ENCODE measurements at regions of chr22 and their contacts with region 1.

Region 1: GRCh38 chr22:17171313-17172171 is 12.5 kb upstream of the HDHD5 start:
- DNase-seq: peak; percentile 94
- CTCF ChIP-seq: peak; percentile 91

Region 2: GRCh38 chr22:16783930-16784354 is 387.6 kb before region 1 on chr22:
- CTCF ChIA-PET with region 1: no interaction called
- POLR2A ChIA-PET with region 1: no interaction called
- DNase-seq: no peak
- CTCF ChIP-seq: peak; percentile 3

Region 3: DNA sequence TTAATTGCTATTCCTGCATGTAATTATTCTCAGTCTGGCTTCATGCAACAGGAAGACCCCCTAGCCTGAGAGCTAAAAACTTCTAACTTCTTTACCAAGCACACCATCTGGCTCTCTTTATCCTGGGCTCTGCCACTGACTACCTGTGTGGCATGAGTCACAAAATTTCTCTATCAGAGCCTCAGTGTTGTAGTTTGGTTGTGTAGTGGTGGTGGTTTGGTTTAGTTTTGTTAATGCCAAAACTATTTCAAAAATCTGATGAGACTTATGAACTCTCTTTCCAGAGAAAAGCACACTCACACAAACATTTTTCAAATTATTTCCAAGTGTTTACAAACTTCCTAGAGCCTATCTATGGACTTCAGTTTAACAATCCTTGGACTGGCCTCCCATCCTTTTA is 94.3 kb before region 1 on chr22:
- CTCF ChIA-PET with region 1: interaction called, 57 read pairs
- POLR2A ChIA-PET with region 1: no interaction called
- DNase-seq: no peak
- CTCF ChIP-seq: no peak

Region 4: DNA sequence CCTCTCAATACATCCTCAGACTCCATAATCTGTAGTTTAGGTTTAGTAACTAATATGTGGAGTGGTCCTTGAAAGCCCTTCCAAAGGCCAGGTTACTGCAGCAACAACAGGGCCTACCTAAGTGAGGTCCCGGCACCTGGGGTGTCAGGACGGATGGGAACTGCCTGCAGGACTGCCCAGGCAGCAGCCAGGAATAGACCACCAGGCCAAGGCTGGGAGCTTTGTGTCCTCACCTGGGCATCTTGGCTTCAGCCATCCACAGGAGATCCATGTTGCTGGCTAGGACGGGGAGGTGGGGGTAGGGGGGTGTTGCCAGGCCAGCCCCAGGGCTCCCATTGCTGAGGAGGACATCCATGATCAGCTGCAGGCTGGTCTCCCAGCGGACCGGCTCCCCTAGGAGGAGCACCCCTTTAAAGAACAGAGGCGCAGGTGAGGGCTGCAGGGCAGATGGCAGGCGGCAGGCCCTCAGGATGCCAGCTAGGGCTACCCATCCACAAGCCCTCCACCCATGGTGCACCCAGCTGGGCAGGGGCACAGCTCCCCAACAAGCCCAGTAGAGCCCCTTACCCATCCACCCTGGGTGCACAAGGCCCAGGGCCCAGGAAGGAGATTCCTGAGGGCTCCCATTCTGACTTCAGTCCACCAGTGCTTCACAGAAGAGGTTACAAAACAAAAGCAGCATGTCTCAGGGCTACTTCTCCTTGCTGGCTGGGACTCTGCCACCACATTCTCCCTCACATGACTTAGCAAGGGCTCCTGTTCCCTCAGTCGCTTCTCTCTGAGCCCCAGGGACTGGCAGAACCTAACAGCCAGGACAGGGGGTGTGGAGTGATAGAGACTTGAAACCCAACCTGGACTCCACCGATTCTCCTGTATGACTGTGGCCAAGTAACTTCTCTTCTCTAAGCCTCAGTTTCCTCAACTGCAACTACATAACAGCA is 30.4 kb before region 1 on chr22:
- CTCF ChIA-PET with region 1: interaction called, 19 read pairs
- POLR2A ChIA-PET with region 1: no interaction called
- DNase-seq: no peak
- CTCF ChIP-seq: no peak

Region 5: DNA sequence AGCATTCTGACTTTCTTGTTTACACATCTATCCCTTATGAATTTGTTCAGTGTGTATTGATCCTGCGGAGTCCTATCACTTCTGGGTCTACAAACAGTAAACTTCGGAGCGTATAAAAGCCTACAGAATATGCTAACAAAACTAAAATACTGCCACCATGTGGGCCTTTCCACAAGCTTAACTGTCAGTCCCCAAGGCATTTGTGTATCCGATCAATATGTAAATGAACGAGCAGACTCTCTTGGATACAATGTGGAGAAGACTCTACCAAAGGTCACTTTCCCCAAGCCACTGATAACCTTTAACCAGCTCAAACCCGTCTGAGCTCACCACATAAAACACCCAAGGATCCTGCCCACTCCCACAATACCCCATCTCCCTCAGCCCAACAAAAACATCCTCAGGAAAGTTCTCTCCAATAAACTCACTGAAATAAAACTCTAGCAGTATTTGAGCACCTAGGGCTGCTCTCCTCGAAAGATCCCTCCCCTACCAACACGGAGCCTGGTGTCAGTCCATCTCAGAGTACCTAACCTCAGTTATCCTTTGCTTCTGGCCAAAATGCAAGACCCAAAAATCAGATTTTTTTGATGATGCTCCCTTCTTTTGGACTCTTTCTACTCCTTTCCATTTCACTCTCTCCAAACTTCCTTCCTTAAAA is 29.9 kb after region 1 on chr22:
- CTCF ChIA-PET with region 1: interaction called, 22 read pairs
- POLR2A ChIA-PET with region 1: no interaction called
- DNase-seq: no peak
- CTCF ChIP-seq: no peak

Region 6: DNA sequence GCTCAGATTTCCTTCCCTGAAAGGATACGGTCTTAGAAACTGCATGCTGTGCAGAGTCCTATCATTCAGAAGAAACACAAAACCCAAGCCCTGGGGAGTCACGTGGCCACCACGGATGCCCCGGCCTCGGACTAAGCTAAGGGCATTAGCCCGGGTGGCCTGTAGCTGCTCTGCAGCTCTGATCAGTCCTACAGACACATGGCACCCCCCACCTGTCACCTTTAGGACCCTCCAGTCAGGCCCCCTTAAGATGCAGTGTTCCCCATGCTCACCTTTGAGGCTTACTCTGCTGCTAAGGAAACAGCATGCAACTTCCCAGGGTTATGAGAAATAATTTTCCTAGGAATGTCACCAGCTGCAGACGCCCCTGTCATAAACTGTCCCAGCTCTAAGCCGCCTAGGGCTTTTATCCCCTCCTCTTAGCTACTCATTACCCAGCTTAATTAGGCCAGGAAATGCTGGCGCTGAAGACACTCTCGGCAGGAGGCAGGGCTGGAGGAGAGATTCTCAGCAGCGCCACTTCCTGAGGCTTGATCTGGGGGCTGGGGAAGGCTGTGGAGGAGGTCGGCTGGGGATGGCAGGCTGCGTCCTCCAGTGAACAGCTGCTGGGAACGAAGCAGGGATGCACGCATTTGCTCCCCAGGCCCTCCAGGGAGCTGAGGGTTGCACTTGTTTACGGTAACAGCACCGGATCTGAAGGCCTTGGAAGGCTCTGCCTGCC is 94.9 kb after region 1 on chr22:
- CTCF ChIA-PET with region 1: interaction called, 12 read pairs
- POLR2A ChIA-PET with region 1: no interaction called
- DNase-seq: no peak
- CTCF ChIP-seq: no peak

Region 7: GRCh38 chr22:17486313-17486712 is 314.8 kb after region 1 on chr22:
- CTCF ChIA-PET with region 1: interaction called, 27 read pairs
- POLR2A ChIA-PET with region 1: no interaction called
- DNase-seq: no peak
- CTCF ChIP-seq: no peak

Measured in GM10248 (cell line).